ENCODE measurements at regions of chr1 and their contacts with region 1.

Region 1: DNA sequence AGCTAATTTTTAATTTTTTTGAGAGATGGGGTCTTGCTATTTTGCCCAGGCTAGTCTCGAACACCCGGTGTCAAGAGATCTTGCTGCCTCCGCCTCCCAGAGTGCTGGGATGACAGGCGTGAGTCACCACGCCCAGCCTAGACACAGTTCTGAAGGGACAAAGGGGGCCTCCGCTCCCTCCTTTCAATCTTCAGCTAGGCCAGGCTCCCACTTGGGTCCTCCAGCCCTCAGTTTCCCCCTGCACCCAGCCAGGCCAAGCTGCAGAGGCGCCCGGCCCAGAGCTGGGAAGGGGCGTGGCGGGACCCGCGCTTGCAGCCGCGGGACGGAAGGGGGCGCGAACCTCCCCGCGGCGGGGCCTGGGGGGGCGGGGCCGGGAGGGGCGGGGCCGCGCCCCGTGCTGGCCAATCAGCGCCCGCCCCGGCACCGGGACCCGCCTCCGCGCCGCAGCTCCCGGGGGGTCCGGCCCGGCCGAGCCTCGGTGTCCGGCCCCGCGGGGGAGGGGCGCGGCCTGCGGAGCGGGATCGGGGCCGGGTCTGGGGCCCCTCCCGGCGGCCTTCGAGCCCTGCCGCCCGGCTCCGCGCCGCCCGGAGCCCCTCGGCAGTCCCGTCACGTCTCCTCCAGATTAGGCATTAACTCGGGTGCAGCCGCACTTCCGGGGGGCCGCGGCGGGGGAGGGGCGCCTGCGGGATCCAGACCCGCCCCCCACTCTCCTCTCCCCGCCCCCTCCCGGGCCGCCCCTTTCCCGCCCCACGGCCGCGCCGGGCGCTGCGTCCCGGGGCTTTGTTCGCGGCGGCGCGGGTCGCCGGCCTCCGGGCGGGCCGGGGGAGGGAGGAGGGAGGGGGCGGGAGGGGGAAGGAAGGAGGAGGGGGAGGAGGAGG is 559 bp upstream of the AGRN start:
- DNase-seq: peak; percentile 90
- ATAC-seq: peak; percentile 75
- H3K4me3 Mint-ChIP-seq: peak overlapping the region; percentile 59
- H3K27ac Mint-ChIP-seq: no peak overlapping the region
- H3K4me1 Mint-ChIP-seq: peaks cover 15% of the 10 kb centered on the region
- H3K27me3 Mint-ChIP-seq: peaks cover 9% of the 10 kb centered on the region

Region 2: DNA sequence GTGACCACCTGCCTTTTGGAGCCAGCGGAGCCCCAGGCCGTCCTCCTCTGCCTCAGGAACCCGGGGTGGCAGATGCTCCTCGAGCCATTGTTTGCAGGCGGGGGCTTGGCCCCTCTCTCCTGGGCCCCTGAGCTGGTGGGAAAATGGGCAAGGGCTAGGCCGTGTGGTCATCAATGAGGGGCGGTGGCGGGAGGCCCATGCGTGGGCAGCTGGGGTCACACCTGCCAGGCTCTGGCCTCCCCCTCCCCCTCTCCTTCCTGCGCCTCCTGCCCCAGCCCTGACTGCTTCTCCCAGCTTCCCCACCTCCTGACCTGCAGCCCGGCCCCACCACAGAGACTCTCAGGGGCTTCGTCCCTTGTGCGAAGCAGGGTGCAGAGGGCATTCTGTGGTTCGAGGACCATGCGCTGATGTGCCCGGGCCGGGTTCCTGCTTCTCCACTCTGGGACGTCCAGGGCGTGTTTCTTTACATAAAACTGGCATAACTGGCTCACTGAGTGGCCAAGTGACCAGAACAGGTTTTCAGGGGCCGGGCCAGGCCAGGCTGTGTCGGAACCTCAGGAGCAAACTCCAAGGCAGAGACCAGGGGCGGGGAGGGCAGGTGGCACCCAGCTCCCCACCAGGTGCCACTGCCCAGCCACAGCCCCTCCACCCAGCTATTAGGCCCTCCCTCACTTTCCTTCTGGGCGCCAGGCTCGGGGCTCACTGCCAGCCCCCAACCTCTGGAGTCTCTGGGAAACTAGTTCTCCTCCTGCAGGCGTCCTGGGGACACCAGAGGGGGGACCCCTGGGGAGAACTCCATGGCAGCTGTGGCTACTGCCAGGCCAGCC is 86.4 kb before region 1 on chr1:
- CTCF ChIA-PET with region 1: no interaction called
- POLR2A ChIA-PET with region 1: no interaction called
- intact Hi-C with region 1: no loop called
- DNase-seq: no peak
- ATAC-seq: no peak
- H3K4me3 Mint-ChIP-seq: no peak overlapping the region
- H3K27ac Mint-ChIP-seq: no peak overlapping the region
- H3K4me1 Mint-ChIP-seq: peaks cover 9% of the 10 kb centered on the region
- H3K27me3 Mint-ChIP-seq: peaks cover 21% of the 10 kb centered on the region

Region 3: DNA sequence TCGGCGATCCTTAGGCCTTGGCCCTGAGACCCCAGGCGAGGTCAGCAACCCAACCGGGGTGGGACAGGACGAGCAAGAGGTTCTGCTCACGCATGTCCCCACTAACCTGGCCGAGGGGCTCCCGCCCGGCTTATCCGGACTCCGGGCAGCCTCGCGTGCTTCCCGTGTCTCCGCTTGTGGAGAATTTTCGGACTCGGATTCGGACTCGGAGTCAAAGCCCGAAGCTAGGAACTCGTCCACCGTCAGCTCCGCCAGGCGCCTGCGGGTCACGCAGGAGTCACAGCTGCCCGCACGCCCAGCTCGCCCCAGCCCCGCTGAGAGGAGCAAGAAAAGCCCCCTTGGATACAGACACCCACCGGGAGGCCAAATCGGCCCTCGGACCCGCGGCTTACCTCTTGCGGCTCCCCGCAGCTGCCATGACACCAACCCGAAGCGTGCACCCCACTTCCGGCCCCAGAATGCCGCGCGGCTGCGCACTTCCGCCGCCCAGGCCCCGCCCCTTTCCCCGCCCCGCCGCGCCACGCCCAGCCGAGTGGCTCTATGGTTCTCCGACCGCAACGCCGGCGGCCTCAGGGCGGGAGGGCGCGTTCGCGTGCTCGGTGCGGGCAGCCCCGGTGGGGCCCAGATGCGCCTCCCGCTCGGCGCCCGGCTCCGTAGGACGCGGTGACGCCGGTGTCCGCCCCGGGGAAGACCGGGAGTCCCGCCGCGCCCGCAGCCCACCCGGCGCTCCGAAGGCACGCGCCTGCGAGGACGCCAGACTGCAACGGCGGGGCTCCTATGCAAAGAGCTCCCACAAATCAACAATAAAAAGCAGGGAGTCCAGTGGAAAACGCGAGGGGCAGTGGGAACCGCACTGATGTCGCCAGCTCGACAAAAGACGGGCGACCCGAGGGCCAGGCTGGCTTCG is 60.3 kb before region 1 on chr1 and contains the start of gene NOC2L:
- CTCF ChIA-PET with region 1: no interaction called
- POLR2A ChIA-PET with region 1: no interaction called
- intact Hi-C with region 1: loop called in 1 of 2 experiments (anchors 10 kb)
- DNase-seq: peak; percentile 98
- ATAC-seq: peak; percentile 86
- H3K4me3 Mint-ChIP-seq: peak within 1 kb of the TSS; percentile 82
- H3K27ac Mint-ChIP-seq: peak within 1 kb of the TSS; percentile 63
- H3K4me1 Mint-ChIP-seq: peaks cover 18% of the 10 kb centered on the region
- H3K27me3 Mint-ChIP-seq: no peaks in the 10 kb centered on the region
- total RNA-seq, gene NOC2L: 112 to 134 TPM

Region 4: DNA sequence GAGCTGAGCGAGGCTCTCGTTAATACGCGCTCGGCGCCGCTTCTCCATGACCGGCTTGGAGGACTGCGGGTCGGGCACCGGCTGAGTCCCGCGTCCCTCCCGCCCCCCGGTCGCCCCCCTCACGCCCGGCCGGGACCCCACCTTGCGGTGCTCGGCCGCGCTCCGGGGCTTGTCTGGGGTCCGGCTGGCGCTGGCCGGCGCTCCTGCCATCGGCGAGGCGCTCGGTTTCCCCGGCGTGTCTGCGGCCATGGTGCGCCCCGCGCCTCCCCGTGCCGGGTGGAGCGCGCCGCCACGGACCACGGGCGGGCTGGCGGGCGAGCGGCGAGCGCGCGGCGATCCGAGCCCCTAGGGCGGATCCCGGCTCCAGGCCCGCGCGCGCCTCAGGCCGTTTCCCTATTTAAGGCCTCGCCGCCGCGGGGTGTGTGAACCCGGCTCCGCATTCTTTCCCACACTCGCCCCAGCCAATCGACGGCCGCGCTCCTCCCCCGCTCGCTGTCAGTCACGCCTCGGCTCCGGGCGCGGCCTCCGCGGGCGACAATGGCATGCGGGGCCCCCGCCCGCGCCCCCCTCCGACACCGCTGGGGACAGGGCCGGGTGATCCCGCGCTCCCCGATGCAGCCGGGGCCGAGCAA is 19.5 kb before region 1 on chr1 and contains the start of gene HES4:
- CTCF ChIA-PET with region 1: interaction called, 20 read pairs
- POLR2A ChIA-PET with region 1: no interaction called
- intact Hi-C with region 1: loop called in 1 of 2 experiments (anchors 1 kb)
- DNase-seq: peak; percentile 85
- ATAC-seq: peak; percentile 67
- H3K4me3 Mint-ChIP-seq: peak within 1 kb of the TSS; percentile 72
- H3K27ac Mint-ChIP-seq: peak within 1 kb of the TSS; percentile 90
- H3K4me1 Mint-ChIP-seq: peaks cover 14% of the 10 kb centered on the region
- H3K27me3 Mint-ChIP-seq: peaks cover 22% of the 10 kb centered on the region
- total RNA-seq, gene HES4: 3.5 to 4.2 TPM

Region 5: DNA sequence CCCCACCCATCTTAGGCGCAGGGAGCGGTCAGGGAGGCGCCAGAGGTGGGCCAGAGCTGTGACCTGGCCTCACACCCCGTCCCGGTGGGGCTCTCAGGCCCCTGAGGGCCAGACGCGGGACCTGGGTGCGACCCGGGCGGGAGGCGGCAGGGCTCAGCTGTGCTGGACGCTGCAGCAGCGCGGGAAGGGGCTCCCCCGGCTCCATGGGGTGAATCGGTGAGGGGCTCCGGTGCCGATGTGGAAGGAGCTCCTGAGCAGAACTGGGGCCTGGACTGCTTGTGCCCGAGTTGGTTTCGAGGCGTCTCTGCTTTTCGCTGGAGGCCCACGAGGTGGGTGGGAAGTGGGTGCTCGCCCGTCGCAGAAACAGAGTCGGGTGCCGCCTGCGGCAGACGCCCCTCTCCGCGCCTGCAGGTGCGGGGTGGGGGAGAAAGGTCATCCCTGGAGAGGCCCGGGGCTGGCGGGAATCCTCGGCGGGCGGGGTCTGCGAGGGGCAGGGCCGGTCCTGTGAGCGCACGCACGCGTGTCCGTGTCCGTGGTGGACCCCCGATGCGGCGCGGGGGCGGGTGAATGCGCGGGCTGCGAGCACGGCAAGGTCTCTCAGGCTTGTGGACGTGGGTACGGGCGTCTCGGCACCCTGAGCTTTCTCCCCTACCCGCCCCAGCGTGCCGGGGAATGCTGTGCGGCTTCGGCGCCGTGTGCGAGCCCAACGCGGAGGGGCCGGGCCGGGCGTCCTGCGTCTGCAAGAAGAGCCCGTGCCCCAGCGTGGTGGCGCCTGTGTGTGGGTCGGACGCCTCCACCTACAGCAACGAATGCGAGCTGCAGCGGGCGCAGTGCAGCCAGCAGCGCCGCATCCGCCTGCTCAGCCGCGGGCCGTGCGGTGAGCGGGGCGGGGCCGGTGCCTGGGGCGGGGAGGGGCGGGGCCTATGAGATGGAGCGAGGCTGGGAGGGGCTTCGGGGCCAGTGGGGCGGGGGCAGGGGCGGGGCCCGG is 20.9 kb after region 1 on chr1:
- CTCF ChIA-PET with region 1: interaction called, 3 read pairs
- POLR2A ChIA-PET with region 1: no interaction called
- intact Hi-C with region 1: loop called (anchors 1 to 2 kb)
- DNase-seq: peak; percentile 93
- ATAC-seq: peak; percentile 87
- H3K4me3 Mint-ChIP-seq: peak overlapping the region; percentile 35
- H3K27ac Mint-ChIP-seq: no peak overlapping the region
- H3K4me1 Mint-ChIP-seq: peaks cover 15% of the 10 kb centered on the region
- H3K27me3 Mint-ChIP-seq: peaks cover 22% of the 10 kb centered on the region

Region 6: DNA sequence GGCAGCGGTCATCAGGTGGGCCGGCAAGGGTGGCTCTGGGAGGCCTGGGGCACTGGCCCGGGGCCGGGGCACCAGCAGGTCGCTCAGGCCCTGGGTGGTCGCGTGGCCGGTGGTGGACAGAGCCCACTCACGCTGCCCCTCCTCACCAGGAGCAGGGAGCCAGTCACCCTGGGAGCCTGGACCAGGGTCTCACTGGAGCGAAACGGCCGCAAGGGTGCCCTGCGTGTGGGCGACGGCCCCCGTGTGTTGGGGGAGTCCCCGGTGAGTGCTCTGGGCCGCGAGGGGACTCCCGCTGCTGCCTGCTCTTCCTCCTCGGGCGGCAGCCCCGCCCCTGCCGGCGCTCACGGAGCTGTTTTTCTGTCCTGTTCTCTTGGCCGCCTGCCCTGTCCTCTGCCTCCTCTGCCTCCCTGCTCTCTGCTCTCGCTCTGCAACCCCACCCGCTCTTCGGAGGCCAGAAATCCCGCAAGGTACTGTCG is 31.3 kb after region 1 on chr1:
- CTCF ChIA-PET with region 1: no interaction called
- POLR2A ChIA-PET with region 1: no interaction called
- intact Hi-C with region 1: no loop called
- DNase-seq: no peak
- ATAC-seq: no peak
- H3K4me3 Mint-ChIP-seq: no peak overlapping the region
- H3K27ac Mint-ChIP-seq: no peak overlapping the region
- H3K4me1 Mint-ChIP-seq: no peaks in the 10 kb centered on the region
- H3K27me3 Mint-ChIP-seq: no peaks in the 10 kb centered on the region

Region 7: DNA sequence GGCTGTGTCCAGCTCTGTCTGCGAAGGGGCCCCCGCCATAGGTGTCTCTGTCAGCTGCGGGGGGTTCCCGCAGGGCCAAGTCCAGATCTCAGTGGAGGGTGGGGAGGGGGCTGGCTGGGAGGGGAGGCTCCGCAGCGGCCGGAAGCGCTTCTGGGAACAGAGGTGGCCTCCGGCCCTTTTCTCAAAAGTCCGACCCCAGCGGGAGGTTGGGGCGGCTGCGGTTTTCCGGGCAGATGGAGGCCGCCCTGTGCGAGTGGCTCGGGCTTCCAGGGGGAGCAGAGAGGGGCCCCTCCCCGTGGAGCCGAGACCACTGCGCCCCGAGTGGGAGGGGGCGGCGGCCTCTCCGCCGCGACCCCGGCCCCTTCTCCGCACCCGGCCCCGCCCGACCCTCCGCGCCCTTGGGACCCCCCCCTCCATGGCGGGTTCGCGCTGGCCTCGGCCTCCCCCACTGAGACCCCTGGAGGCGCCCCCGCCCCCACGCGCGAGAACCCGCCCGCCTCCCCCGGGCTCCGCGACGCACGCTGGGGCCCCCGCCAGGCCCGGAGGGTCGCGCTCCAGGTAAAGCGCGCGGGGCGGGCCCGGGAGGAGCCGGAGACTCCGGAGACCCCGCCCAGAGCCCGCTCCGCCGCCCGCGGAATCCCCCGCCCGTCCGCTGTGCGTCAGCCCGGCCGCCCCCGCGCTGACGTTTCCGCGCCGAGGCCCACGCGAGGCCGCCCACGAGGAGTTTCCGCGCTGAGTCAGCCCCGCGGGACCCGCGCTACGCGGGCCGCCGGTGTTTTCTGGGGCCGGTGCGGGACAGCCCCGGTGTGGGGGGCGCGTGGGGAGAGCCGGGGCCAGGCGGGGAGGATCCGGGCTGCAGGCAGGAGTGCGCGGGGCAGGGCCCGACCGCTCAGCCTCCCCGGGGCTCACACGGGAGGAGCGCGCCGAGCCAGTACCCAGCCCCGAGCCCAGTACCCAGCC is 181.8 kb after region 1 on chr1:
- CTCF ChIA-PET with region 1: no interaction called
- POLR2A ChIA-PET with region 1: no interaction called
- intact Hi-C with region 1: loop called in 1 of 2 experiments (anchors 2 kb)
- DNase-seq: peak; percentile 94
- ATAC-seq: peak; percentile 78
- H3K4me3 Mint-ChIP-seq: peak overlapping the region; percentile 69
- H3K27ac Mint-ChIP-seq: peak overlapping the region; percentile 85
- H3K4me1 Mint-ChIP-seq: peaks cover 12% of the 10 kb centered on the region
- H3K27me3 Mint-ChIP-seq: no peaks in the 10 kb centered on the region

Region 8: DNA sequence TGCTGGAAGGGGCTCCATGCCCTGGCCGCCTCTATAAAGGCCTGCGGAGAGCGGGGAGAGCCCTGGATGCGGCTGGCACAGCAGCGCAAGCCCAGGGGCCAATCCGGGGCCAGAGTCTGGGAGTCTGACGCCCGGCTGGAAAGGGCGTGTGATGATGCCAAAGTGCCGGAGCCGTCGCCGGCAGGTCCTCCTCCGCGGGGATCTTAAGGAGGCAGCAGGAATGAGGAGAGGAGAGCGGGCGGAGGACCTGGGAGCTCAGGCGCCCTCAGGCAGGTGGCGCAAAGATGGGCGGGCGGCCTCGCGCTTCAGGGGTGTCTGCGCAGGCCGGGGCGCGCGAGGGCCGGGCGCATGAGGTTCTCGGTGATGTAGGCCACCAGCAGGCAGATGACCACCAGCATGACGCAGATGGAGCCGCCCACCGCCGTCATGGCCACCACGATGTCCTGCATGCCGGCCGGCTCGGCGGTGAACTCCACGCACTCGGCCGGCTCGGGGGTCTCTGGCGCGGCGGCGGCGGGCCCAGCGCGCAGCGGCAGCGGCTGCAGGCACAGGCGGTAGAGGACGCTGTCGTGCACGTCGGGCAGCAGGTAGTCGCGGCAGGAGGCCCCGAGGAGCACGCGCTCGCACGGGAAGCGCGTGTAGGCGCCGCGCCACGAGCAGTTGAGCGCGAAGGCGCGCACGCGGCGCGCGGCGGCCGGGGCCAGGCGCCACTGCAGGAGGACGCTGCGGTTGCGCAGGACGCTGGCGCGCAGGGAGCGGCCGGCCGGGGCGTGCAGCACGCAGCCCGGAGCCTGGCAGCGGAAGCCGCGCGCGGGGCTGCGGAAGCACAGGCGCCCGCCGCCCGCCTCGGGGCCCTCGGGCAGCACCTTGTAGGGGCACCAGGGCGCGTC is 579.9 kb after region 1 on chr1:
- CTCF ChIA-PET with region 1: no interaction called
- POLR2A ChIA-PET with region 1: no interaction called
- intact Hi-C with region 1: no loop called
- DNase-seq: peak; percentile 65
- ATAC-seq: peak; percentile 50
- H3K4me3 Mint-ChIP-seq: peak overlapping the region; percentile 63
- H3K27ac Mint-ChIP-seq: no peak overlapping the region
- H3K4me1 Mint-ChIP-seq: peaks cover 5% of the 10 kb centered on the region
- H3K27me3 Mint-ChIP-seq: peaks cover 6% of the 10 kb centered on the region